ENCODE measurements at regions of chr5 and their contacts with region 1.

Region 1: DNA sequence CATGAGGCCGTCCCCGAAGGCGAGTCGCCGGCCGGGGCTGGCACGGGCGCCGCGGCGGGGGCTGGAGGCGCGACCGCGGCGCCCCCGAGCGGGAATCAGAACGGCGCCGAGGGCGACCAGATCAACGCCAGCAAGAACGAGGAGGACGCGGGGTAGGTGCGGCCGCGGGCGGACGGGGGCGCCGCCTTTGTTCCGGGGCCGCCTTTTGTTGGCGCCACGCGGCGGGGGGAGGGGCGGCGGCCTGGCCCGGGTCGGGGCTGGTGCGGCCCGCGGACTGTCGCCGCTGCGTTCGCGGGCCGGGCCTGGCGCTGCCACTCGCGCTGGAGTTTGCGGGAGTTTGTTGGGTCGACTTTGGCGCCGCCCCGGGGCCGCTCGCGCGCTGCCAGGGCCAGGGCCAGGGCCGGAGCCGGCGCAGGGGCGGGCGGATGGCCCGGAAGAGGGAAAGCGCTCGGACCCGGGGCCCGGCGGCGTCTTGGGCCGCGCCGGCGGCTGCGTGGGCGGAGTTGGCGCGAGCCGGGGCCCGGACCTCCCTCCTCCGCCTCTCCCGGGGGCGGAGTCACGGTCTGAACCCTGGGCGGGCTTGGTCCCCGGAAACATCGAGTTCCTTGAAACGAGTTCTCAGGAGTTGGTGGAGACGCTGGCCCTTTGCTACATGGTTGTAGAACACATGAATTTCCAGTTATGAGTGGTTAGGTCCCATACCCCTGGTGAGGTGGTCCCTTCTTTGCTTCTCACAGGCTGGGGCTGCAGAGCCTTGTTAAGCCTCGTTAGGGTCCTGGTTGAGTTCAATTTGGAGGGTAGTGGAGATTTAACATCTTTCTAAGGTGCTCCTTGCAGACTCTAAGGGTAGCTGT is 789 bp downstream of the HNRNPAB start:
- DNase-seq: peak; percentile 91 to 94
- ATAC-seq: peak; percentile 76
- H3K4me3 ChIP-seq: peak overlapping the region; percentile 80 to 96
- H3K27ac ChIP-seq: peak overlapping the region; percentile 79 to 90
- H3K4me1 ChIP-seq: peaks cover 3 to 6% of the 10 kb centered on the region in 2 donors
- H3K27me3 ChIP-seq: peaks cover 0 to 1% of the 10 kb centered on the region in 2 donors

Region 2: GRCh38 chr5:178137991-178138390 is 67.1 kb before region 1 on chr5:
- intact Hi-C with region 1: no loop called
- DNase-seq: no peak
- ATAC-seq: no peak
- H3K4me3 ChIP-seq: no peak overlapping the region
- H3K27ac ChIP-seq: no peak overlapping the region
- H3K4me1 ChIP-seq: no peaks in the 10 kb centered on the region
- H3K27me3 ChIP-seq: no peaks in the 10 kb centered on the region

Region 3: DNA sequence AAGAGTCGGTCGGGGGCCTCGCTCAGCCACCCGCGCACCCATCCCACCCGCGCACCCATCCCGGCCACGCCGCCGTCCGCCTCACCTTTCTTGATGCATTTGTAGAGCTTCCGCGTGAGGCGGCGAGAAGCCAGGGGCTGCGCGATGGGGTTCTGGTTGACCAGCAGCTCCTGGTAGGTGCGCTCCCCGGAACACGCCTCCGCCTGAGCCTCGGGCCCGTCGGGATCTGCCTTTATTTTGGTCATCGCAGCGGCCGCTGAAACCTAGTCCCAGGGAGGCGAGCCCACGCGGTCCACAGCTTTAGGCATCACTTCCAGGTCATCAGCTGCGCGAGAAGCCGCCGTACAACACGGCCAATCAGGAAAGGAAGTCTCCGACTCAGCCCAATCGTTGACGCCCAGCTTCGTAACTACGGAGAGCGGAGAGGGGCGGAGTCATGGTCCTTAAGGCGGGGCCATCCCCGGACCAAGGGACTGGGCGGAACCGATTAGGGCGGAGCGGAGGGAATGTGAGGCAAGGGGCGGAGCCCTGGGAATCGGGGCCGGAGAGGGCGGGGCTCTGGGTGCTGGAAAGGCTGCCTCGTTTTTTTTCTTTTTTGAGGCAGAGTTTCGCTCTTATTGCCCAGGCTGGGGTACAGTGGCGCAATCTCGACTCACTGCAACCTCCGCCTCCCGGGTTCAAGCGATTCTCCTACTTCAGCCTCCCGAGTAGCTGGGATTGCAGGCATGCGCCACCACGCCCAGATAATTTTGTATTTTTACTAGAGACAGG is 51.4 kb before region 1 on chr5 and contains the start of gene NHP2:
- intact Hi-C with region 1: loop called in 1 of 2 experiments (anchors 5 kb)
- DNase-seq: peak; percentile 99
- ATAC-seq: peak; percentile 99
- H3K4me3 ChIP-seq: peak within 1 kb of the TSS; percentile 20 to 60
- H3K27ac ChIP-seq: peak within 1 kb of the TSS in 1 of 2 donors; percentile 38
- H3K4me1 ChIP-seq: no peaks in the 10 kb centered on the region
- H3K27me3 ChIP-seq: no peaks in the 10 kb centered on the region
- total RNA-seq, gene NHP2: 55.7 to 70.6 TPM

Measured in aorta (tissue), 5 donors.